CD8-positive, alpha-beta memory T cell (primary cell): ENCODE measurements at regions of chr9 and their contacts with region 1.

Region 1: DNA sequence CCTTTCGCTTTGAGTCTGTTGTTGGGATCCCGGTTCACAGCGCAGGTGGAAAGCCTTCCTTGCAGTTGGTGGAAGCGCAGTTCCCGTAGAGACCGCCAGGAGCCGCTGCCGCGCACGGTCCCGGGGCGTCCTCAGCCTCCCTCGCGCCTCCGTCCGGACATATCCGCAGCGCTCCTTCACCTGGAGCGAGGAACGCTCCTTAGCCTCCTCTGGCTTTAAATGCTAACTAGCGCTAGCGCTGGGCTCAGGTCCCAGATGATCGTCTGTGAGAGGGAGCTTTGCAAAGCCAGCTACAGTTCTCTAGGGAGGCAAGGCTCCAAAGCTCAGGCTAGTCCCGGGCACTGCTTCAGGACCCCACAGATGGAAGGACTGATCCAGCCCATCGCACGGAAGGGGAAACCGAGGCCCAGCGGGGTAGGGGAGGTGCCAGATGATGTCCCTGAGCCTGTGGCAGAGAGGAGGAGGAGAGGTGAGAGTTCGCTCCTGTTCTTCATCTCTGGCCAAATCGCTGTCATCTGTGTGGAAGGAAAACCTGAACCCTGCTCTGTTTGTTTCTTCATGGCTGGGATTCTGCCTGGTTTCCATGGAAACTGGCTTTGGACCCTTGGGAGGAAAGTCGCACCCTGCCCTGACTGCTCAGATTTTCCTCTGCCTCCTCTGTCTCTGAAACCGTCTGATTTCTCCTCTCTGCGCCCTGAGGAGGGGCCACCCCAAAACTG is 31.4 kb downstream of the COL15A1 start:
- DNase-seq: peak; percentile 63 to 81 (median 73)
- H3K4me3 ChIP-seq: peak overlapping the region; percentile 62
- H3K4me3 Mint-ChIP-seq: peak overlapping the region in 6 of 7 donors; percentile 47 to 86 (median 66)
- H3K27ac ChIP-seq: no peak overlapping the region
- H3K27ac Mint-ChIP-seq: peak overlapping the region in 1 of 8 donors; percentile 58
- H3K4me1 ChIP-seq: peaks cover 8% of the 10 kb centered on the region
- H3K4me1 Mint-ChIP-seq: peaks cover 4 to 7% (median 6%) of the 10 kb centered on the region in 3 donors
- H3K27me3 ChIP-seq: peaks cover 9% of the 10 kb centered on the region
- H3K27me3 Mint-ChIP-seq: peaks cover 12 to 14% of the 10 kb centered on the region in 2 donors

Region 2: GRCh38 chr9:98860871-98861293 is 114.3 kb before region 1 on chr9:
- CTCF ChIA-PET with region 1: no interaction called
- POLR2A ChIA-PET with region 1: no interaction called
- DNase-seq: no peak
- H3K4me3 ChIP-seq: no peak overlapping the region
- H3K4me3 Mint-ChIP-seq: no peak overlapping the region
- H3K27ac ChIP-seq: no peak overlapping the region
- H3K27ac Mint-ChIP-seq: peak overlapping the region in 1 of 8 donors; percentile 39
- H3K4me1 ChIP-seq: no peaks in the 10 kb centered on the region
- H3K4me1 Mint-ChIP-seq: no peaks in the 10 kb centered on the region
- H3K27me3 ChIP-seq: no peaks in the 10 kb centered on the region
- H3K27me3 Mint-ChIP-seq: peaks cover 12 to 56% of the 10 kb centered on the region in 2 donors

Region 3: GRCh38 chr9:98944057-98944733 is 31.0 kb before region 1 on chr9:
- CTCF ChIA-PET with region 1: no interaction called
- POLR2A ChIA-PET with region 1: no interaction called
- DNase-seq: no peak
- H3K4me3 ChIP-seq: no peak overlapping the region
- H3K4me3 Mint-ChIP-seq: peak overlapping the region in 4 of 7 donors; percentile 22 to 57 (median 40)
- H3K27ac ChIP-seq: no peak overlapping the region
- H3K27ac Mint-ChIP-seq: no peak overlapping the region
- H3K4me1 ChIP-seq: no peaks in the 10 kb centered on the region
- H3K4me1 Mint-ChIP-seq: peaks cover 2 to 15% (median 6%) of the 10 kb centered on the region in 3 donors
- H3K27me3 ChIP-seq: peaks cover 13% of the 10 kb centered on the region
- H3K27me3 Mint-ChIP-seq: peaks cover 25 to 72% of the 10 kb centered on the region in 2 donors

Region 4: DNA sequence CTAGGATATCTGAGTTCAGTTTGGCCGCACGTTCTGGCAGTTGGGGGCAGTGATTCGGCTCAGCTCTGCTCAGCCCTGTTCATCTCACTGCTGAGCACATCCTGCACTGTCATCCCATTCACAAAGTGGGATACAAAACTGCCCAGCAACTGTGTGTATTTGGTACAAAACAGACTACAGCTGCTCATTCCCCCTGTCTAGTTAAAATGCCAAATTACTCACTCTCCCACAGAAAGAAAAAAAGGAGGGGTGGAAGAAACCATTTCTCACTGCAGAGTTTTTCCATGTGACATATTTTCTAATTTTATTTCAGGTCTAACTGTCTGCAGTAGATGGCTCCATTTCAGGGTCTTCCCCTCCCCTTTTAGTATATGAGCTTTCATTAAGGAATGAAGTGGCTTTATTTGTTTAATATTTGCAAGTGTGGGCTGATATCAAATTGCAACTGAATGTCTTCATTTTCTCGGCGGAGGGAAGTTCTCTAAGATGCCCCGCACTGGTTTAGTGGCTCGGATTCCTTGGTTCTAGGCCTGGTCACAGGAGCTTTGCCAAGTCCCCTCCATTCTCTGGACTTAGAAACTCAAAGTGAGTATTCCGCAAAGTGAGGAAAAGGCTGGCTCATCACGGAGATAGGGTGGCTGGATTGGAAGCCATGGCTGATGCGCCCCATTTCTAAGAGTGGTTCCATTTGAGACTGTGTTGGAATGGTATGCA is 16.7 kb before region 1 on chr9:
- CTCF ChIA-PET with region 1: interaction called, 16 read pairs
- POLR2A ChIA-PET with region 1: no interaction called
- DNase-seq: no peak
- H3K4me3 ChIP-seq: no peak overlapping the region
- H3K4me3 Mint-ChIP-seq: no peak overlapping the region
- H3K27ac ChIP-seq: no peak overlapping the region
- H3K27ac Mint-ChIP-seq: peak overlapping the region in 1 of 8 donors; percentile 41
- H3K4me1 ChIP-seq: no peaks in the 10 kb centered on the region
- H3K4me1 Mint-ChIP-seq: no peaks in the 10 kb centered on the region
- H3K27me3 ChIP-seq: no peaks in the 10 kb centered on the region
- H3K27me3 Mint-ChIP-seq: peaks cover 4 to 18% of the 10 kb centered on the region in 2 donors

Region 5: DNA sequence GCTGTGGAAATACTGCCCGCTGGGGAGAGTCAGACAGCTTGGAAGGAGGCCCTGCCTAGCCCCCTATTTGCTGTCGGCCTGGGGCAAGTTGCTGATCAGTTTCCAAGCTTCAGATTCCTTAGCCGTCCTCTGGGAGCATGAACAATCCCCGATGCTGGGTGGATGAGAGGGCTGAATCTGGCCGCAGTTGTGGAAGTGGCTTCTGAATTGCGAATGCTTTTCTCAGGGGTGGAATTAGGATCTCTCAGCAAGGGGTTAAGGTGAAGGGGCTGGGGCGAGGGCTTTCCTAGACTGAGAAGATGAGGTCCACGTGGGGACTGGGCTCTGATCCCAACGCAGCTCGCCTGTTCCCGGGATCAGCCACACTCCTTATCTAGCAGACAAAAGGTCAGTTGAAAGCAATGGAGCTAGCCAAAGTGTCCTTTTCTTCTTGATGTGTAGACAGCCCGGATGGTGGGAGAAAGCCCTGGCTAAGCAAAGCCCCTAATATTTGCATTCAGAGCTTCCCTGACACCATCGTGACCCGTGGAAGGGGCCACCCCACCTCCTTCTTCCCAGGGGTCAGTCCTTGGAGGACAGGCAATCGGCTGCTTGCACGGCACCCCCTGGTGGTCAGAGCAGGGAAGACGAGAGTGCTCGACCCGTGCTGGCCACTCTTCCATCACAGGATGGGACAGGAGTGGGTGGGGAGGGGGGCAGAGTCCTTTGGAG is 23.4 kb after region 1 on chr9:
- CTCF ChIA-PET with region 1: interaction called, 13 read pairs
- POLR2A ChIA-PET with region 1: no interaction called
- DNase-seq: peak; percentile 29 to 67 (median 45)
- H3K4me3 ChIP-seq: no peak overlapping the region
- H3K4me3 Mint-ChIP-seq: no peak overlapping the region
- H3K27ac ChIP-seq: no peak overlapping the region
- H3K27ac Mint-ChIP-seq: peak overlapping the region in 1 of 8 donors; percentile 63
- H3K4me1 ChIP-seq: peaks cover 19% of the 10 kb centered on the region
- H3K4me1 Mint-ChIP-seq: peaks cover 13 to 24% (median 23%) of the 10 kb centered on the region in 3 donors
- H3K27me3 ChIP-seq: no peaks in the 10 kb centered on the region
- H3K27me3 Mint-ChIP-seq: peaks cover 15 to 19% of the 10 kb centered on the region in 2 donors